ENCODE measurements at regions of chr13 and their contacts with region 1.

Region 1: GRCh38 chr13:30132623-30133553 is 174.5 kb downstream of the KATNAL1 start:
- DNase-seq: peak; percentile 93 to 99 (median 98)
- ATAC-seq: peak; percentile 100
- H3K4me3 ChIP-seq: no peak overlapping the region
- H3K4me3 Mint-ChIP-seq: peak overlapping the region; percentile 22
- H3K27ac ChIP-seq: no peak overlapping the region
- H3K27ac Mint-ChIP-seq: no peak overlapping the region
- H3K4me1 ChIP-seq: peaks cover 13% of the 10 kb centered on the region
- H3K4me1 Mint-ChIP-seq: peaks cover 15% of the 10 kb centered on the region
- H3K27me3 ChIP-seq: no peaks in the 10 kb centered on the region
- H3K27me3 Mint-ChIP-seq: no peaks in the 10 kb centered on the region
- CTCF ChIP-seq: peak; percentile 84

Region 2: GRCh38 chr13:30114571-30115256 is 18.2 kb before region 1 on chr13:
- CTCF ChIA-PET with region 1: interaction called, 42 read pairs
- POLR2A ChIA-PET with region 1: interaction called, 11 read pairs
- intact Hi-C with region 1: no loop called
- DNase-seq: peak; percentile 85 to 97 (median 95)
- ATAC-seq: peak; percentile 88
- H3K4me3 ChIP-seq: peak overlapping the region; percentile 53
- H3K4me3 Mint-ChIP-seq: peak overlapping the region; percentile 91
- H3K27ac ChIP-seq: no peak overlapping the region
- H3K27ac Mint-ChIP-seq: peak overlapping the region; percentile 78
- H3K4me1 ChIP-seq: peaks cover 29% of the 10 kb centered on the region
- H3K4me1 Mint-ChIP-seq: peaks cover 44% of the 10 kb centered on the region
- H3K27me3 ChIP-seq: no peaks in the 10 kb centered on the region
- H3K27me3 Mint-ChIP-seq: no peaks in the 10 kb centered on the region
- CTCF ChIP-seq: peak; percentile 86

Region 3: GRCh38 chr13:30158774-30159445 is 26.0 kb after region 1 on chr13:
- CTCF ChIA-PET with region 1: interaction called, 12 read pairs
- POLR2A ChIA-PET with region 1: interaction called, 34 read pairs
- intact Hi-C with region 1: loop called (anchors 1 kb)
- DNase-seq: peak in 4 of 14 experiments; percentile 14 to 75 (median 71)
- ATAC-seq: peak; percentile 83
- H3K4me3 ChIP-seq: no peak overlapping the region
- H3K4me3 Mint-ChIP-seq: no peak overlapping the region
- H3K27ac ChIP-seq: no peak overlapping the region
- H3K27ac Mint-ChIP-seq: no peak overlapping the region
- H3K4me1 ChIP-seq: peaks cover 47% of the 10 kb centered on the region
- H3K4me1 Mint-ChIP-seq: peaks cover 49% of the 10 kb centered on the region
- H3K27me3 ChIP-seq: no peaks in the 10 kb centered on the region
- H3K27me3 Mint-ChIP-seq: no peaks in the 10 kb centered on the region
- CTCF ChIP-seq: peak; percentile 74

Region 4: DNA sequence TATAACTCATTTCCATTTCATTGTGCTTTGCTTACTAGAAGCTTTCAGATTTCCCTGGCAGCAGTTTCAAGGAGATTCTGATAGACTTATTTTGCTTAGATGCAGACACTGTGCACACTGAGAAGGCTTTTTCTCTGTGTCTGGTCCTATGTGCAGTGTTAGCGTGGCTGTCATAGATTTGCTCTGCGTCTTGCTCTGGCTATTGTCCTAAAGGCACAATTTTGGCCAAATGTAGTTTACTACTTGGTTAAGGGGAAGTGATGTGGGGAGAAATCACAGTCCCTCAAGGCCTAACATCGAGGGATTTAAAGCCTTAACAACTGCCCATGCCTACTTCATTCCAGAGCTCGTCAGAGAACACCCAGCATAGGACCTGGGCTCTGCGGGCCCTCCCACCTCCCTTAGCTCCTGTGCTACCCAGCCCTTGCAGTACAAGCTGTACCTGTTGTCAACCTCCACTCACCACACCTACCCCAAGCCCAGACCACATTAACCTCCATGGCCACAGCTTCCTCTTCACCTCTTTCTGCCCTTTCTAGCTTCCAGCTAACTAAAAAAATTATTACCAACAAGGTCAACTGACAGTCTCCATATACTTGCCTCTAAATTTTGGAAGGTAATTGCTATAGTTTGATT is 213.4 kb after region 1 on chr13:
- CTCF ChIA-PET with region 1: no interaction called
- POLR2A ChIA-PET with region 1: interaction called, 5 read pairs
- intact Hi-C with region 1: loop called in 1 of 2 experiments (anchors 5 kb)
- DNase-seq: peak; percentile 30 to 89 (median 56)
- ATAC-seq: peak; percentile 93
- H3K4me3 ChIP-seq: peak overlapping the region; percentile 18
- H3K4me3 Mint-ChIP-seq: peak overlapping the region; percentile 61
- H3K27ac ChIP-seq: no peak overlapping the region
- H3K27ac Mint-ChIP-seq: peak overlapping the region; percentile 62
- H3K4me1 ChIP-seq: peaks cover 38% of the 10 kb centered on the region
- H3K4me1 Mint-ChIP-seq: peaks cover 55% of the 10 kb centered on the region
- H3K27me3 ChIP-seq: no peaks in the 10 kb centered on the region
- H3K27me3 Mint-ChIP-seq: no peaks in the 10 kb centered on the region
- CTCF ChIP-seq: no peak

Region 5: GRCh38 chr13:30572859-30573275 is 440.0 kb after region 1 on chr13:
- CTCF ChIA-PET with region 1: no interaction called
- POLR2A ChIA-PET with region 1: no interaction called
- intact Hi-C with region 1: loop called (anchors 2 to 5 kb)
- DNase-seq: peak in 5 of 14 experiments; percentile 9 to 67 (median 63)
- ATAC-seq: peak; percentile 55
- H3K4me3 ChIP-seq: peak overlapping the region; percentile 44
- H3K4me3 Mint-ChIP-seq: peak overlapping the region; percentile 82
- H3K27ac ChIP-seq: peak overlapping the region; percentile 16 to 38
- H3K27ac Mint-ChIP-seq: peak overlapping the region; percentile 95
- H3K4me1 ChIP-seq: peaks cover 15% of the 10 kb centered on the region
- H3K4me1 Mint-ChIP-seq: peaks cover 37% of the 10 kb centered on the region
- H3K27me3 ChIP-seq: no peaks in the 10 kb centered on the region
- H3K27me3 Mint-ChIP-seq: no peaks in the 10 kb centered on the region
- CTCF ChIP-seq: peak; percentile 31

Region 6: DNA sequence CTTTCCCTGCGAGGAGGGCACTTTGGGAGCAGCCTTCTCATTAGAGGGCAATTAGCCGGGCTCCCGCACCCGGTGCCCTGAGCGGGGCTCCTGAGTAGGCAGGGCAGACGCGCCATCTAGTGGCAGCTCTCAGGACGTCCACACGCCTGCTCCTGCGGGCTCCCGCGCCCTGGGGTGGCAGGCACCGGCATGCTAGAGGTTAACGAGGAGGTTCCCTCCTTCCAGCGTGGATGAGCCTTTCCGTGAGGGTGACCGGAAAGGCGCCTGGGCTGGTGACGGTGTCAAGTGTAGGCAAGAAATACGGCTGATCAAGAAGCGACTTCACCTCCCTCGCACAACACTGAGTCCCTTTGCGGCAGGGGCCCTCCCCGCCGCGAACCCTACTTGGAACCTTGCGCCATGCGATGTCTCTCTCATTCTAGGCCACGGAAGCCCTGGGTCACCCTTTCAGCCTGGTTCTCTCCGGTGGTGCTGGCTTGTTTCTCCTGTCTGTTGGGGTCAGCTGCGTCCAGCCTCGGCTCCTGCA is 670.1 kb after region 1 on chr13:
- CTCF ChIA-PET with region 1: interaction called, 4 read pairs
- POLR2A ChIA-PET with region 1: interaction called, 5 read pairs
- intact Hi-C with region 1: loop called (anchors 1 to 2 kb)
- DNase-seq: peak; percentile 60 to 89 (median 74)
- ATAC-seq: peak; percentile 98
- H3K4me3 ChIP-seq: peak overlapping the region; percentile 23
- H3K4me3 Mint-ChIP-seq: peak overlapping the region; percentile 55
- H3K27ac ChIP-seq: no peak overlapping the region
- H3K27ac Mint-ChIP-seq: no peak overlapping the region
- H3K4me1 ChIP-seq: peaks cover 8% of the 10 kb centered on the region
- H3K4me1 Mint-ChIP-seq: peaks cover 7% of the 10 kb centered on the region
- H3K27me3 ChIP-seq: no peaks in the 10 kb centered on the region
- H3K27me3 Mint-ChIP-seq: no peaks in the 10 kb centered on the region
- CTCF ChIP-seq: peak; percentile 94

Measured in CD4-positive, alpha-beta T cell (primary cell).